ENCODE measurements at regions of chr2 and their contacts with region 1.

Region 1: DNA sequence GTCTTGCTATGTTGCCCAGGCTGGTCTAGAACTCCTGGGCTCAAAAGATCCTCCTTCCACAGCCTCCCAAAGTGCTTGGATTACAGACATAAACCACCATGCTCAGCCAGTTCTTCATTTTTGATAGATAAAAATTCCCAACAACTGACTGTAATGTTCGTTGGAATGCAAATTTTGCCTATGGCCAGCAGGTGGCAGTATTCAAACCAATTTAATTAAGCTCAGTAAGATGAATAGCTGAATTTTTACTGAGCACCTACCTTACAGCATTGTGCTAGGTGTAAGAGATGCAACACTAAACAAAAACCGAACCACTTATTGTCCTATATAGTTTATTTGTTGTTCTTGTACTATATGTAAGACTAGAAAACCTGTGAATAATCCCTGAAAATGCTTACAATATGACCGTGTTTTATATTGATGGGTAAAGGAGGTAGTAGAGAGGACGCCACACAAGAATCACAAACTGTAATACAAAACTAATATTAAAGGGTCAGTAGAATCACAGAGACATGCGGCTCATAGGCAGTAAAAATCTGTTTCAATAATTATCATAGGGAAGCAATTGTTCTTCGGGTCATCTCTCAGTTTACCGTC is 8.2 kb upstream of the TMEM182 start:
- DNase-seq: peak in 1 of 2 donors; percentile 44
- ATAC-seq: peak; percentile 51 to 69
- H3K4me3 ChIP-seq: no peak overlapping the region
- H3K27ac ChIP-seq: no peak overlapping the region
- H3K4me1 ChIP-seq: peaks cover 16 to 19% of the 10 kb centered on the region in 2 donors
- H3K27me3 ChIP-seq: no peaks in the 10 kb centered on the region
- CTCF ChIP-seq: peak; percentile 76 to 85 (median 82)
- POLR2A ChIP-seq: no peak

Region 2: GRCh38 chr2:102606363-102606762 is 147.3 kb before region 1 on chr2:
- in situ Hi-C with region 1: no loop called
- intact Hi-C with region 1: no loop called
- DNase-seq: peak; percentile 23 to 49
- ATAC-seq: peak; percentile 79 to 95
- H3K4me3 ChIP-seq: no peak overlapping the region
- H3K27ac ChIP-seq: peak overlapping the region; percentile 70 to 83 (median 77)
- H3K4me1 ChIP-seq: peaks cover 17 to 28% of the 10 kb centered on the region in 2 donors
- H3K27me3 ChIP-seq: no peaks in the 10 kb centered on the region
- CTCF ChIP-seq: no peak
- POLR2A ChIP-seq: no peak

Region 3: GRCh38 chr2:102782933-102783332 is 29.3 kb after region 1 on chr2:
- in situ Hi-C with region 1: no loop called
- intact Hi-C with region 1: no loop called
- DNase-seq: no peak
- ATAC-seq: no peak
- H3K4me3 ChIP-seq: no peak overlapping the region
- H3K27ac ChIP-seq: peak overlapping the region; percentile 35 to 73 (median 60)
- H3K4me1 ChIP-seq: peaks cover 52 to 53% of the 10 kb centered on the region in 2 donors
- H3K27me3 ChIP-seq: no peaks in the 10 kb centered on the region
- CTCF ChIP-seq: no peak
- POLR2A ChIP-seq: no peak

Region 4: DNA sequence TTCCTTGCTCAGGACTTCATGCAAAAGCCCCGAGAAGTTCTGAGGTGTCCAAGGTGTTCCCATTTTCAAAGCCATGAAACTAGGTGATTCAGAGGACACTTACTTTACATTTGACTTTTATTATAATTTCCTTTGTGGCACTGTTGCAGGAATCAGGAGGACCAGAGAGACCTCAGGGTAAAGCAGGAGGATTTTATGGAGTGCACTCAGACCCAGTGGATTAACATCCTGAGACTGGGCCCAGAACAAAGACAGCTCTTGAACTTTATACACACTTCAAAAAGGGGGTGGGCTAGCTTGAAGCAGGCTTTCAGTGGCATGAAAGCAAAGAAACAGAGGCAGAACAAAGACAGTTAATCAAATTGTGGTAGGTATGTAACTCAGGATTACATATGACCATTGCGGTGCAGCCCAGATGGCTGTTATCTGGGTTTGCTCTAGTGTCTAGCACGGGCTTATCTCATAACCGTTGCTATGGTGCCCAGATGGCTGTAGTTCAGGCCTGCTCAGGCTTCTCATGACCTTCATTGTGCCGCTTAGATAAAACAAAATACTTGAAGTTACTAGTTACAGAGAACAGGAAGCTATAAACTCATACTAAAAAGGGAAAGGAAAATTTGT is 47.5 kb after region 1 on chr2:
- in situ Hi-C with region 1: loop called in 3 of 4 experiments (anchors 5 to 10 kb)
- intact Hi-C with region 1: loop called (anchors 1 kb)
- DNase-seq: peak in 1 of 2 donors; percentile 35
- ATAC-seq: no peak
- H3K4me3 ChIP-seq: no peak overlapping the region
- H3K27ac ChIP-seq: peak overlapping the region; percentile 72 to 86 (median 79)
- H3K4me1 ChIP-seq: peaks cover 39 to 46% of the 10 kb centered on the region in 2 donors
- H3K27me3 ChIP-seq: no peaks in the 10 kb centered on the region
- CTCF ChIP-seq: no peak
- POLR2A ChIP-seq: no peak

Region 5: GRCh38 chr2:102806250-102806837 is 52.7 kb after region 1 on chr2:
- in situ Hi-C with region 1: loop called (anchors 5 to 10 kb)
- intact Hi-C with region 1: loop called (anchors 1 kb)
- DNase-seq: peak; percentile 80 to 90
- ATAC-seq: peak; percentile 87 to 91
- H3K4me3 ChIP-seq: no peak overlapping the region
- H3K27ac ChIP-seq: peak overlapping the region; percentile 55 to 86 (median 78)
- H3K4me1 ChIP-seq: peaks cover 56 to 71% of the 10 kb centered on the region in 2 donors
- H3K27me3 ChIP-seq: no peaks in the 10 kb centered on the region
- CTCF ChIP-seq: peak; percentile 81 to 88 (median 85)
- POLR2A ChIP-seq: no peak